ENCODE measurements at regions of chr2 and their contacts with region 1.

Region 1: DNA sequence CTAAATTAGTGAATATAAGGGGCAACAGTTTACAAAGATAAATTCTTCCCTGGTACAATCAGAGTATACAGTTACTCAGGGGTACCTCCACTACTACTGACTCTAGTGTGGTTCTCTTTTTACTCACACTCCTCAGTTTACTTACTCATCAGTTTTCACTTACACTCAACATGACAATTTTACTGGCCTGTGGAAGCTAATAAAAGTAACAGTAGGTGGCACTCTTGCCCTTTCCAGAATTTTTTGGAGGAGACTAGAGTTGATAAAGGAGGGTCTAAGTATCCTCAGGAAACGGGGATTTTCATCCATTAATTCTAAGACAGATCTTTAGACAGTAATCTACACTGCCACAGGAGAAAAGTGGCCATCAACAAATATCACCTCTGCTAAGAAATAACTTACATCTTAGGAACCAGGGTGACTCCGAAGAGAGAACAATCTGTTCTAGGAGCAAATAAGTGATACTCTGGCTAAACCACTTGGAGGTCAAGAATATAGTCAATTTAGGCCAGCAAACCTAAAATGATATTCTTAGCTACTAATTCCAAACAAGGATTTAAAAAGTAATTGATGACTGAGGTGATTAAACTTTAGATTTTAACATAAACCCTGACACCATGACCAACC is 61.3 kb downstream of the ATL2 start:
- DNase-seq: peak; percentile 31 to 58 (median 38)
- ATAC-seq: peak; percentile 89
- H3K4me3 ChIP-seq: no peak overlapping the region
- H3K27ac ChIP-seq: no peak overlapping the region
- H3K4me1 ChIP-seq: no peaks in the 10 kb centered on the region
- H3K27me3 ChIP-seq: no peaks in the 10 kb centered on the region
- CTCF ChIP-seq: peak; percentile 49 to 82 (median 62); a peak in 5 of 6 replicates
- EP300 ChIP-seq: no peak
- POLR2A ChIP-seq: no peak
- RAD21 ChIP-seq: peak; percentile 88 to 91

Region 2: GRCh38 chr2:38214209-38214717 is 101.6 kb before region 1 on chr2:
- CTCF ChIA-PET with region 1: no interaction called
- POLR2A ChIA-PET with region 1: no interaction called
- in situ Hi-C with region 1: no loop called
- intact Hi-C with region 1: no loop called
- DNase-seq: no peak
- ATAC-seq: no peak
- H3K4me3 ChIP-seq: no peak overlapping the region
- H3K27ac ChIP-seq: no peak overlapping the region
- H3K4me1 ChIP-seq: no peaks in the 10 kb centered on the region; a peak in 2 of 5 replicates
- H3K27me3 ChIP-seq: peaks cover 8 to 22% of the 10 kb centered on the region in 2 experiments; a peak in 4 of 5 replicates
- CTCF ChIP-seq: no peak
- EP300 ChIP-seq: no peak
- POLR2A ChIP-seq: no peak
- RAD21 ChIP-seq: no peak

Region 3: GRCh38 chr2:38377050-38377828 is 61.4 kb after region 1 on chr2 and contains the start of gene ATL2:
- CTCF ChIA-PET with region 1: interaction called, 3 read pairs
- POLR2A ChIA-PET with region 1: interaction called, 7 read pairs
- in situ Hi-C with region 1: no loop called
- intact Hi-C with region 1: loop called (anchors 1 kb)
- DNase-seq: peak; percentile 91 to 97 (median 92)
- ATAC-seq: peak; percentile 80
- H3K4me3 ChIP-seq: peak within 1 kb of the TSS; percentile 91
- H3K27ac ChIP-seq: peak within 1 kb of the TSS; percentile 96
- H3K4me1 ChIP-seq: peaks cover 11 to 34% of the 10 kb centered on the region in 2 experiments
- H3K27me3 ChIP-seq: no peaks in the 10 kb centered on the region
- CTCF ChIP-seq: no peak
- EP300 ChIP-seq: peak; percentile 40
- POLR2A ChIP-seq: peak; percentile 92
- RAD21 ChIP-seq: no peak
- polyA plus RNA-seq, gene ATL2: 12.0 to 18.3 TPM

Region 4: DNA sequence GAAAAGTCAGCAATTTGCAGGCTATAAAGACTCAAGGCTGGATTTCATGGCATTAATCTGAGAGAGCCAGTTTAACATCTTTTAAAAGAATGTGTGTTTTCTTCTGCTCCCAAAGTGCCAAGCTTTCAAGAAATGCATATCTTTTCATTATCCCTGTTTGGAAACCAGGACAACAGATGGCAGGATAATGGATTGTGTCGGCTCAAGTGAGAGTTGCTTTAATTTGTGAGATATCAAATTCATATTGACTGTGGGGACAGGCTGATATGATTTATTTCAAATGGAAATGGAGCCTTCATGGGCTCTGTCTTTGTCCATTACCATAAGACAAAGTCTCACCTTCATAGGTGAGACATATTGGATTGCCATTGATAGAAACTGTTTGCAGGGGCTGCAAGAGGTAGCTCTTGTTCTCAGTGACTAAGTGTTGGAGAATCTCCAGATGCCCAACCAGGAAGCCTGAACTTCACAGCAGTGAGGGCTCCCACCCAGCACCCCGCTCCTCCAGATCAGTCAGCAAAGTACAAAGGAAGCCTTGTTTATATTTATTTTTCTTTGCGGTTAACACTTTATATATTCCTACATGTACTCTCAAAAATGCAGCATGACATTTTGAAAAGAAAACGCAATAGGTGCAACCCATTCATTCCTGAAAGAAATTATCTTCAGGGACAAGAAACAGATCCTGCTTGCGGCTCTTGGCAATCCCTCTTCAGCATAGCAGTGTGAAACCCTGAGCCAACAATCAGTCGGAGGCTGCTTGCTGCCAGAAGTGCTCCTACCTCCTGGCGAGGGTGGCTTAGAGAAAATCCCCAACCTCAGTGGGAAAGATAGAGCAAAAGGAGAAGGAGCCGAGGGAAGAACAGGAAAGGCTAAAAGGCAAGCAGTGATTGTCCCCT is 127.1 kb after region 1 on chr2:
- CTCF ChIA-PET with region 1: no interaction called
- POLR2A ChIA-PET with region 1: interaction called, 4 read pairs
- in situ Hi-C with region 1: no loop called
- intact Hi-C with region 1: loop called (anchors 5 kb)
- DNase-seq: no peak
- ATAC-seq: no peak
- H3K4me3 ChIP-seq: no peak overlapping the region
- H3K27ac ChIP-seq: no peak overlapping the region
- H3K4me1 ChIP-seq: peaks cover 0 to 20% of the 10 kb centered on the region in 2 experiments; a peak in 4 of 5 replicates
- H3K27me3 ChIP-seq: peaks cover 8 to 19% of the 10 kb centered on the region in 2 experiments; a peak in 4 of 5 replicates
- CTCF ChIP-seq: no peak
- EP300 ChIP-seq: no peak
- POLR2A ChIP-seq: no peak
- RAD21 ChIP-seq: no peak

Region 5: DNA sequence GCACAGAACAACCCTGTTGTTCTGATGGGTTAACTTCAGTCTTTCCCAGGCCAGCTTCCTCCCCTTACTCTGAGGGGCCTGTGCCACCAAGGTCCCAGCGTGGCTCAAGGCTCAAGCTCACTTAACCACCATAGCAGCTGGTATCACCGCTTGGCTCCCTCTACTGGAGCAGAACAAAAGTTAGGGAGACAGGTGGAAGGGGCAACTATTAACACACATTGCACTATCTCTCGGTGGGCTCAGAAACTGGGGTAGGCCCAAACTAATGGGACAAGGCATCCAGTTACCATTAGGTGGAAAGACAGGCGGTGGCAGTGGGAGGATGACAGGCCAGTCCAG is 149.9 kb after region 1 on chr2:
- CTCF ChIA-PET with region 1: no interaction called
- POLR2A ChIA-PET with region 1: no interaction called
- in situ Hi-C with region 1: no loop called
- intact Hi-C with region 1: loop called (anchors 5 kb)
- DNase-seq: peak; percentile 25 to 53 (median 38)
- ATAC-seq: peak; percentile 81
- H3K4me3 ChIP-seq: no peak overlapping the region
- H3K27ac ChIP-seq: no peak overlapping the region
- H3K4me1 ChIP-seq: peaks cover 4 to 8% of the 10 kb centered on the region in 2 experiments; a peak in 4 of 5 replicates
- H3K27me3 ChIP-seq: no peaks in the 10 kb centered on the region
- CTCF ChIP-seq: peak; percentile 45 to 64 (median 55)
- EP300 ChIP-seq: no peak
- POLR2A ChIP-seq: no peak
- RAD21 ChIP-seq: peak; percentile 17 to 58

Region 6: GRCh38 chr2:38508311-38509039 is 192.7 kb after region 1 on chr2:
- CTCF ChIA-PET with region 1: interaction called, 18 read pairs
- POLR2A ChIA-PET with region 1: interaction called, 5 read pairs
- in situ Hi-C with region 1: loop called (anchors 5 kb)
- intact Hi-C with region 1: loop called (anchors 1 kb)
- DNase-seq: peak; percentile 79 to 95 (median 80)
- ATAC-seq: peak; percentile 87
- H3K4me3 ChIP-seq: no peak overlapping the region
- H3K27ac ChIP-seq: peak overlapping the region; percentile 21; the same call in 1 of the 3 replicates
- H3K4me1 ChIP-seq: peaks cover 15 to 27% of the 10 kb centered on the region in 2 experiments
- H3K27me3 ChIP-seq: no peaks in the 10 kb centered on the region
- CTCF ChIP-seq: peak; percentile 78 to 88 (median 87)
- EP300 ChIP-seq: 0 out of 2 replicates have a peak, but pooled peaks have one; percentile 18
- POLR2A ChIP-seq: no peak
- RAD21 ChIP-seq: peak; percentile 85 to 90